Gastrocnemius medialis (tissue), 4 donors: ENCODE measurements at regions of chr12 and their contacts with region 1.

Region 1: DNA sequence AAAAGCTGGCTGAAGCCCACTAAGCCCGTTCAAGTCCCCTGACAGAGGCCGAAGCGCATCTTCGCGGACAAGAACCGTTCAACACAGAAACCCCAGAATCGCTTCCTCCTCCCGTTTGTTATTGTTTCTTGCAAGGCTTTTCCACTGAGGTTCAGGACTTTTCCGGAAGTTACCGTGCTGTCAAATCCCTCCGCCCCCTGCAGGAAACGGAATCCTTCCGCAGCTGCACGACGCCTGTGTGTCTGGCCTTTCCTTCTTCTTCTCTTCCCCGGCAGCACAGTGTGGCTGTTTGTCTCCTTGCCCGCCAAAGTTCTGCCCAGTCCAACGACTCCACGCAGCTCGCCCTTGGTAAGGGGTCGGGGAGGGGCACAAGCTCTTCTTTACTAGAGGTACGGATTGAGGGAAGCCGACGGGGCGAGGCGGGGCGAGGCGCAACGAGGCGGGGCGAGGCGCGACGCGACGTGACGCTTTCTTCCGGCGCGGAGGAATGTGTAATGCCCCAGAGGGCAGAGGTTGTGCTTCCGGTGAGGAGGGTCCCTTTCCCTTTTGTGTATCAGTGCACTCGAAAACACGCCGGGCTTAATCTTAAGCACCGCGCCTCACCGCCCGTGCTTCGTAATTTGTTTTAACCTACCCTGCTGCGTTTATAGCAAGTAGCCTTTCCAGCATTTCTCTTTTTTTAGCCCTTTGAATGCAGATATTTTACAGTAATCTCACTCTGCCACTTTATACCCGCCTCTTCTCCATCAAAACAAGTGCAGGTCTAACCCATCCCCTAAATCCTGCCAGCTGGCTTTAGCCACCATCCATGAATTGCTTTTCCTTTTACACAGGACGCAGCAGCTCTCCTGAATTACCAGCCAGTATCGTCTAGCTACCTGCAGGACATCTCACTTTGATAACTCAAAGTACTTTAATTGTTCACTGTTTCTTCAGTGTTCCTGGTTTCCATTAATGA is at the start of gene KDM5A:
- DNase-seq: peak; percentile 82 to 83
- ATAC-seq: peak; percentile 97 to 98
- H3K4me3 ChIP-seq: peak within 1 kb of the TSS; percentile 89 to 98 (median 92)
- H3K27ac ChIP-seq: peak within 1 kb of the TSS; percentile 91 to 95 (median 94)
- H3K4me1 ChIP-seq: peaks cover 37 to 39% of the 10 kb centered on the region in 2 donors
- H3K27me3 ChIP-seq: no peaks in the 10 kb centered on the region
- CTCF ChIP-seq: no peak
- POLR2A ChIP-seq: peak; percentile 19 to 27
- total RNA-seq, gene KDM5A: 18.1 to 43.5 (median 25.5) TPM

Region 2: DNA sequence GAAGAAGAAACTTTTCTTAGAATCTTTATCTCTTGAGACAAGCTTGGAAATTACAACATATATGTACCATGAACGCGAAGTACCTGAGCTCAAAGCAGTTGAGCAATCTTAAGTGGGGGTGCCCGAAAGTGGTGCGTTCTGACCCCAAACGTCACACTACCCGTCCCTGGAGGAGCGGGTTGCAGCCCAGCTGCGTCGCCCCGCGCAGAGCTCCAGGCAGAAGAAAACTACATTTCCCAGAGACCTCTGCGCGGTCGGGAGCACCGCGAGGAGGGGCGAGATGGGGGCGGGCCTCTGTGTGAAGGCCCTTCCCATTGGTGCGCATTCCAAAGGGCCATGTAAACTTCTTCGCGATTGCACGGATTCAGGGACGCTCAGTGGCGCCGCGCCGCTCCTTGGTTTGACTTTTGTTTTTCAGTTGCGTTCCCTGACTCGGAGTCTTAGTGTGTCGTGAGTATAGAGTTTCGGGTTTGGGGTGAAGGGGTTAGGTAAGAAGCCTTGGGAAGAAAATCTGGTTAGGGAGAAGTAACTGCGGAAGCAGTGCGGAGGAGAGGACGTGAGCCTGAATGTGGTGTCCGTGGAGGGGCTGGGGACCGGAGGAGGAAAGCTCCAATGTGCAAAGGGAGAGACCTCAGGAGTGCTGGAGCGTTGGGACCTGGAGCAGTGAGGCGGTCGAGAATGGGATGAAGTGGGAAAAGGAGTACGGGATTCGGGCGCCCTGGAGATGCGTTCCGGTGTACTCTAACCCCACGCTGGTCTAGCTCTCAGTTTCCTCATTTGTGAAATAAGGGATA is 12.0 kb after region 1 on chr12 and contains the start of gene CCDC77:
- in situ Hi-C with region 1: no loop called
- intact Hi-C with region 1: loop called (anchors 1 kb)
- DNase-seq: peak; percentile 88 to 92
- ATAC-seq: peak; percentile 99
- H3K4me3 ChIP-seq: peak within 1 kb of the TSS; percentile 70 to 80 (median 72)
- H3K27ac ChIP-seq: peak within 1 kb of the TSS; percentile 81 to 87 (median 82)
- H3K4me1 ChIP-seq: peaks cover 16 to 19% of the 10 kb centered on the region in 2 donors
- H3K27me3 ChIP-seq: no peaks in the 10 kb centered on the region
- CTCF ChIP-seq: peak in 2 of 5 experiments; percentile 29 to 30
- POLR2A ChIP-seq: peak; percentile 20 to 63
- total RNA-seq, gene CCDC77: 2.6 to 20.2 (median 7.4) TPM

Region 3: GRCh38 chr12:1719139-1719538 is 1329.7 kb after region 1 on chr12:
- in situ Hi-C with region 1: no loop called
- intact Hi-C with region 1: no loop called
- DNase-seq: no peak
- ATAC-seq: peak; percentile 38 to 50
- H3K4me3 ChIP-seq: no peak overlapping the region
- H3K27ac ChIP-seq: peak overlapping the region; percentile 44 to 77 (median 60)
- H3K4me1 ChIP-seq: peaks cover 72 to 73% of the 10 kb centered on the region in 2 donors
- H3K27me3 ChIP-seq: no peaks in the 10 kb centered on the region
- CTCF ChIP-seq: no peak
- POLR2A ChIP-seq: no peak